Activated CD4-positive, alpha-beta memory T cell treated with anti-CD3 and anti-CD28 coated beads for 36 hours (primary cell): ENCODE measurements at regions of chr6 and their contacts with region 1.

Region 1: GRCh38 chr6:127971945-127972391 is 71.1 kb upstream of the THEMIS start:
- DNase-seq: peak; percentile 59
- H3K4me3 Mint-ChIP-seq: peak overlapping the region; percentile 73
- H3K27ac Mint-ChIP-seq: peak overlapping the region; percentile 88
- H3K4me1 Mint-ChIP-seq: peaks cover 48% of the 10 kb centered on the region
- H3K27me3 Mint-ChIP-seq: no peaks in the 10 kb centered on the region

Region 2: GRCh38 chr6:127786109-127786508 is 185.9 kb before region 1 on chr6:
- CTCF ChIA-PET with region 1: no interaction called
- POLR2A ChIA-PET with region 1: no interaction called
- intact Hi-C with region 1: loop called (anchors 1 kb)
- DNase-seq: no peak
- H3K4me3 Mint-ChIP-seq: no peak overlapping the region
- H3K27ac Mint-ChIP-seq: no peak overlapping the region
- H3K4me1 Mint-ChIP-seq: peaks cover 61% of the 10 kb centered on the region
- H3K27me3 Mint-ChIP-seq: no peaks in the 10 kb centered on the region

Region 3: GRCh38 chr6:127900935-127901334 is 71.0 kb before region 1 on chr6 and contains the start of gene THEMIS:
- CTCF ChIA-PET with region 1: no interaction called
- POLR2A ChIA-PET with region 1: interaction called, 4 read pairs
- intact Hi-C with region 1: loop called (anchors 1 kb)
- DNase-seq: peak; percentile 50
- H3K4me3 Mint-ChIP-seq: peak within 1 kb of the TSS; percentile 89
- H3K27ac Mint-ChIP-seq: peak within 1 kb of the TSS; percentile 93
- H3K4me1 Mint-ChIP-seq: peaks cover 64% of the 10 kb centered on the region
- H3K27me3 Mint-ChIP-seq: no peaks in the 10 kb centered on the region
- total RNA-seq, gene THEMIS: 9.5 to 11.5 TPM

Region 4: GRCh38 chr6:127918506-127919427 is 53.2 kb before region 1 on chr6:
- CTCF ChIA-PET with region 1: interaction called, 3 read pairs
- POLR2A ChIA-PET with region 1: interaction called, 5 read pairs
- intact Hi-C with region 1: loop called (anchors 1 kb)
- DNase-seq: no peak
- H3K4me3 Mint-ChIP-seq: peak overlapping the region; percentile 49
- H3K27ac Mint-ChIP-seq: peak overlapping the region; percentile 44
- H3K4me1 Mint-ChIP-seq: peaks cover 85% of the 10 kb centered on the region
- H3K27me3 Mint-ChIP-seq: no peaks in the 10 kb centered on the region

Region 5: DNA sequence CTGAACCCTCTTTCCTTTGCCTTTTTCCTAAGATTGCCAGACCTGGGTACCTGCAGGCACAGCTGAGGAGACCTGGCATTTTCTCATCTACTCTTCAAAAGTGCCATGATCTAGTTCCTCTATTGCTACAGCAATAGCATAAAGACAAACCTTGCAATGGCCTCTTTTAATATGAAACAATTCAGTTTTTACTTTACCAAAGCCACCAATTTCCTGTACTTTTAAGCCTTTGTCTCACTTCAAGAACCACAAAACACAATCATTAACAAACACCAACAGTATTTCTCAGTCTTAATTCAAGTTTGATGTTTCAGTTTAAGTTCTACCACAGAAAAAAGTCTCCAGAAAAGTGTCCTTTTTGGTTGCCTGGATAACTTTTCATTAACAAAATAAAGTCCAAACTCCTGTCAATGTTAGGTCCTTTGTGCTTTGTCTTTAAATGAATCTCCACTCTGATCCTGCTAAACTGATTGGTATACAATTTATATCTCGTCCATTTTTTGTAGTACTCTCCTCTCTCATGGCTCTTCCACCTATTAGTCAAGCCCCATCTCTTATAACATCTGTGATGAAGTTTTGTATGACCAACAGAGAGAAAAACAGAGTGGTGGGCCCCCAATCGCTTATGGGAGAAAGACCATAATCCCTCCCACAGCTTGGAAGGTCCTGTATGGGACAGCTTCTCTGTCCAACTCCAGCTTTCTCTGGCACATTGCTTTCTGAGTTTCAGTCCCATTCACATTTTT is 20.6 kb before region 1 on chr6:
- CTCF ChIA-PET with region 1: interaction called, 4 read pairs
- POLR2A ChIA-PET with region 1: interaction called, 3 read pairs
- intact Hi-C with region 1: loop called (anchors 1 kb)
- DNase-seq: no peak
- H3K4me3 Mint-ChIP-seq: peak overlapping the region; percentile 43
- H3K27ac Mint-ChIP-seq: peak overlapping the region; percentile 55
- H3K4me1 Mint-ChIP-seq: peaks cover 48% of the 10 kb centered on the region
- H3K27me3 Mint-ChIP-seq: no peaks in the 10 kb centered on the region

Region 6: GRCh38 chr6:128098000-128098581 is 126.1 kb after region 1 on chr6:
- CTCF ChIA-PET with region 1: no interaction called
- POLR2A ChIA-PET with region 1: no interaction called
- intact Hi-C with region 1: no loop called
- DNase-seq: peak; percentile 14
- H3K4me3 Mint-ChIP-seq: no peak overlapping the region
- H3K27ac Mint-ChIP-seq: no peak overlapping the region
- H3K4me1 Mint-ChIP-seq: peaks cover 16% of the 10 kb centered on the region
- H3K27me3 Mint-ChIP-seq: no peaks in the 10 kb centered on the region

Region 7: GRCh38 chr6:128327890-128328289 is 355.9 kb after region 1 on chr6:
- CTCF ChIA-PET with region 1: interaction called, 3 read pairs
- POLR2A ChIA-PET with region 1: no interaction called
- intact Hi-C with region 1: loop called (anchors 10 kb)
- DNase-seq: peak; percentile 24
- H3K4me3 Mint-ChIP-seq: no peak overlapping the region
- H3K27ac Mint-ChIP-seq: no peak overlapping the region
- H3K4me1 Mint-ChIP-seq: no peaks in the 10 kb centered on the region
- H3K27me3 Mint-ChIP-seq: no peaks in the 10 kb centered on the region